Right ventricle myocardium inferior (tissue), 1 donor: ENCODE measurements at regions of chr17 and their contacts with region 1.

Region 1: GRCh38 chr17:74430706-74431567 is 951 bp upstream of the GPRC5C start:
- DNase-seq: peak; percentile 91
- ATAC-seq: peak; percentile 70

Region 2: GRCh38 chr17:74457146-74457819 is 26.3 kb after region 1 on chr17:
- intact Hi-C with region 1: loop called (anchors 2 kb)
- DNase-seq: peak; percentile 93
- ATAC-seq: no peak